SK-N-SH (cell line): ENCODE measurements at regions of chr1 and their contacts with region 1.

Region 1: DNA sequence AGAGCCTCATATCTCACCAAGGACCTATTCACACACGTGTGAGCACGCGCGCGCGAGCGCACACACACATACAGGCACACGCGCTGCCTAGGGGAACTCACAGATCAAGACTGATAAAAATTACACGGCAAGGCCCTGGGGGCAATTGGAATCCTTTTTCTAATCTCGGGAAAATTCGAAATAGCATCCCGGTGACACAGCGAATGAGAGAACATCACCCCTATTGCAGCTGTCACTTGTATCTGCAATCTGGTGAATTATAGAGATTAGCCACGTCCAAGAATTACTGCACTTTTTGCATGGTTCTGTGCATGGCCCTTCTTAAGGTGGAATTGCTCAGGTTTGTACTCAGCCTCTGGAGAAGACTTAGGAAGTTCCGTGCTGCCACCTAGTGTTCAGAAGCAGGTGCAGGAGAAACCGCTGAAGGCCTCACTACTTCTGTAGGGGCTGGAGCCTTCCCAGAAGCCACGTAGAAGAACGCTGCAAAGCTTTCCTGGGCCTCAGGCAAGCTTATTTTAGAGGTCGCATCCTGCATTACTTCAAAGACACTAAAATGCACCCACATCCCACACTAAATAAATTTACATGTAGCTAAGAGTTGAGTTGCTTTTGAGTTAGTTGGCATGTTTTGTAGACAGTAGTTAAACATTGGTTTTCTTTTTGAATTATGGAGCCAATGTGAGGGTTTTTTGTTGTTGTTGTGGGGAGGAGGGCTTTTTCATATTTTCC is 229.2 kb upstream of the CAMK1G start:
- DNase-seq: peak; percentile 68
- H3K4me3 ChIP-seq: peak overlapping the region in 1 of 2 experiments; percentile 10; a peak in 1 of 4 replicates
- H3K27ac ChIP-seq: peak overlapping the region in 1 of 2 experiments; percentile 60; a peak in 2 of 4 replicates
- H3K4me1 ChIP-seq: peaks cover 0 to 38% of the 10 kb centered on the region in 2 experiments; a peak in 2 of 4 replicates
- H3K27me3 ChIP-seq: no peaks in the 10 kb centered on the region
- CTCF ChIP-seq: peak; percentile 94
- EP300 ChIP-seq: peak; percentile 22 to 58; a peak in 3 of 4 replicates
- RAD21 ChIP-seq: peak; percentile 97

Region 2: GRCh38 chr1:209207701-209208286 is 146.5 kb before region 1 on chr1:
- CTCF ChIA-PET with region 1: interaction called, 100 read pairs
- POLR2A ChIA-PET with region 1: interaction called, 3 read pairs
- DNase-seq: peak; percentile 87
- H3K4me3 ChIP-seq: peak overlapping the region; percentile 38 to 49
- H3K27ac ChIP-seq: peak overlapping the region in 1 of 2 experiments; percentile 71; a peak in 2 of 4 replicates
- H3K4me1 ChIP-seq: peaks cover 0 to 23% of the 10 kb centered on the region in 2 experiments; a peak in 3 of 4 replicates
- H3K27me3 ChIP-seq: no peaks in the 10 kb centered on the region
- CTCF ChIP-seq: peak; percentile 87
- EP300 ChIP-seq: no peak
- RAD21 ChIP-seq: peak; percentile 92

Region 3: DNA sequence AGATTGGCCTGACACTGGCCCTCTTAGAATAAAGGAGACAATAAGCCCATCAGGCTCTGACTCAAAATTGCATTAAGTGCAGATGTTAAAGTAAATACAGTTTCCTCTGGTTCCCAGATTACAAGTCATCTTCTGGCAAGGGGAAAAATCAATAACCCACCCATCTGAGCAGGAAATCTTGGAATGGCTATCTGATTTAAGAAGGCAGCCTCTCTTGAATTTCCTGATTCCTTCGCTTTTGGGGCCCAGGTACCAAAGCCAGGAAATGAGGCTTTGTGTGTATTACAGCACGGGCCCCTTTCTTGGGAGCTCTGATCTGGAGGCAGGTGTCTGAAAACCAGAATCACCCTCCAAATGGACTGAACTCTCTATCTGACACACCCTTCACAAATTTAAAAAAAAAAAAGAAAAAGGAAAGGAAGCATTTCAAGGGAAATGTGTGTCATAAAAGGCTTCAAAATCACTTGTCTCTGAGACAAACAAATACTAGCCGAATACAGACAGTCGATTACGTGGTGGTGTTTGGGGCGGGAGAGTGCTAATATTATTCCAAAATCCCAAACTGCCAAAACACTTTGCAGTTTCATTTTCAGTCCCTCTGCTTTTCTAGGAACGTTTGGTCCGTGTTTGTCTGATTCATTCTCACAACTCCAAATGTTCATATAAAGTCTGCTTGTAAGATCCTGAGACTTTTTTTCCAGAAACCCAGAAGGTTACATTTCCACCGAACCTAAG is 11.7 kb before region 1 on chr1:
- CTCF ChIA-PET with region 1: interaction called, 15 read pairs
- POLR2A ChIA-PET with region 1: no interaction called
- DNase-seq: no peak
- H3K4me3 ChIP-seq: no peak overlapping the region
- H3K27ac ChIP-seq: no peak overlapping the region
- H3K4me1 ChIP-seq: peaks cover 0 to 25% of the 10 kb centered on the region in 2 experiments; a peak in 2 of 4 replicates
- H3K27me3 ChIP-seq: no peaks in the 10 kb centered on the region
- CTCF ChIP-seq: no peak
- EP300 ChIP-seq: no peak
- RAD21 ChIP-seq: no peak

Region 4: DNA sequence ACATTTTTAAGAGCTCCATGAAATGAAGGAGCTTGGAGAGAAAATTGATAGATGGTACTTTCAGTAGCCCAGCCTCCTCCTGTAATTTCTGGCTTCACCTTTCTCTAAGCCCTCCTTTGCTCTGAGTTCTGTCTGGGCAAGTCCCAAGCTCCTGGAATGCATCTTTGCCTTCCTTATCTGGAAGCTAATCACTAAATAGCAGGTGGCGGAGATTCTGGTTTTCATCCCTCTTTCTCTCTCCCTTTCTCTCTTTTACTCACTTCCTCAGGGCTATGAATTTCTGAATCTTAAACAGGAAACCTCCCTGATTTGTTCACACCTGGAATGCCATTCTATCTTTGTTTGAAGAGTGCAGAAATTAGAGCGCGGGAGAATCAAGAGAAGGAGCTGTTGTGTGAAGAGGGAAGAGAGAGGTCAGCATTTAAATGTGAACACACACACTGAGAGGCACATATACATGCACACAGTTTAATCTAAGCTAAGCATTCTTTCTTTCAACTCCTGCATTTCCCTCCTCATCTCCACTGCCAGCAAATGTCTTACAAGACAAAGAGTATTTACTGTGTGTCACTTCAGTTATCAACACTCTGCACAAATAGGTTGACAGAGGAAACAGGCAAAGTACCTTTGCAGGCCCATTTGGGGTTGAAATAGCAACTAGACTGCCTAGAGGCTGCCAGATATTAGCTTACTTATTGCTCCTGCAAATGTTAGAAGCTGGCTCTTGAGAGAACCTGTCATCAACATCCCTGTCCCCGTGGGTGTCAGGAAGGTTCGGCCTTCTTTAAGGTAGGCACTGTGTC is 29.8 kb after region 1 on chr1:
- CTCF ChIA-PET with region 1: interaction called, 12 read pairs
- POLR2A ChIA-PET with region 1: no interaction called
- DNase-seq: no peak
- H3K4me3 ChIP-seq: no peak overlapping the region
- H3K27ac ChIP-seq: peak overlapping the region in 1 of 2 experiments; percentile 83; a peak in 2 of 4 replicates
- H3K4me1 ChIP-seq: peaks cover 10 to 25% of the 10 kb centered on the region in 2 experiments
- H3K27me3 ChIP-seq: no peaks in the 10 kb centered on the region
- CTCF ChIP-seq: no peak
- EP300 ChIP-seq: peak in 1 of 2 experiments; percentile 22; a peak in 1 of 4 replicates
- RAD21 ChIP-seq: no peak

Region 5: GRCh38 chr1:209490013-209490412 is 135.7 kb after region 1 on chr1:
- CTCF ChIA-PET with region 1: interaction called, 10 read pairs
- POLR2A ChIA-PET with region 1: no interaction called
- DNase-seq: peak; percentile 18
- H3K4me3 ChIP-seq: no peak overlapping the region; a peak in 1 of 4 replicates
- H3K27ac ChIP-seq: no peak overlapping the region
- H3K4me1 ChIP-seq: peaks cover 0 to 5% of the 10 kb centered on the region in 2 experiments
- H3K27me3 ChIP-seq: no peaks in the 10 kb centered on the region
- CTCF ChIP-seq: peak; percentile 70
- EP300 ChIP-seq: no peak
- RAD21 ChIP-seq: peak; percentile 73